ENCODE measurements at regions of chr11 and their contacts with region 1.

Region 1: DNA sequence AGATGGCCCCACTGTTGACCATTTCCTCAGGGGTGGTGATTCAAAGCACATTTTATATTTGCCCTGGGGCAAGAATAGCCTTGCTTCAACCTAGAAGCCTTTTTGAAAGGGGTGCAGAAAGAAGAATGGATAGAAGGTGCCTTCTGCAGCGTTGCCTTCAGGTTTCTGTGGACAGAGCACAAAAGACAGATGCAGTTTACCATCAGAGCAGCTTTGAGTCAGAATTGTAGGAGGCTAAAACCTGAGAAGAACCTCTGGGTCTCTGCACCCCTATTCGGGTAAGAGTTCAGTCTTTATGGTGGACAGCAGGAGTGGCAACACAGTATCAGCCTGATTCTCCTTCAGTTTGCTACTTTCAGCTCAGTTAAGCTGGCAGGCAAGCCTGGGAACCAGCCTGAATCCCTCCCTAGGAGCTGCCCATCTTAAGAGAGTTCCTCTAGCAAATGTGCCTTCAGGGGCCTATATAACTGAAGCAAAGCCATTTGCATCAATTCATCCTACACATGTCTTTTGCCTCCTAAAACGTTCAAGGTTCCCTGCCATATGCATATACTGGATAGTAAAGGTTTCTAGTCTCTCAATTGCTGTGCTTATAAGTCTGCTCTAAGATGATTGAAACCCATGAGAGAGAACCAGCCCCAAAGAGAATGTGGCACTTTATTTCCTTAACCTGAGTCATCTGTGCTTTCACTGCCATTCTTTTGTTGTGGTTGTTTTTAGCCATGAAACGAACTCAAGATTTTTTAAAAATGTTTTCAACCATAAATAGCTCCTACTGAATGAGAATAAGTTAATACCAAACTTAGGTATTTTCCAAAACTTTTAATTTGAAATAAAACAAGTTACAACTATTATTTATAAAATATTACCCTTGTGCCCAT is 123.0 kb downstream of the TRIM44 start:
- DNase-seq: no peak
- H3K4me3 Mint-ChIP-seq: no peak overlapping the region
- H3K27ac Mint-ChIP-seq: no peak overlapping the region
- H3K4me1 Mint-ChIP-seq: peaks cover 22% of the 10 kb centered on the region
- H3K27me3 Mint-ChIP-seq: peaks cover 3% of the 10 kb centered on the region

Region 2: DNA sequence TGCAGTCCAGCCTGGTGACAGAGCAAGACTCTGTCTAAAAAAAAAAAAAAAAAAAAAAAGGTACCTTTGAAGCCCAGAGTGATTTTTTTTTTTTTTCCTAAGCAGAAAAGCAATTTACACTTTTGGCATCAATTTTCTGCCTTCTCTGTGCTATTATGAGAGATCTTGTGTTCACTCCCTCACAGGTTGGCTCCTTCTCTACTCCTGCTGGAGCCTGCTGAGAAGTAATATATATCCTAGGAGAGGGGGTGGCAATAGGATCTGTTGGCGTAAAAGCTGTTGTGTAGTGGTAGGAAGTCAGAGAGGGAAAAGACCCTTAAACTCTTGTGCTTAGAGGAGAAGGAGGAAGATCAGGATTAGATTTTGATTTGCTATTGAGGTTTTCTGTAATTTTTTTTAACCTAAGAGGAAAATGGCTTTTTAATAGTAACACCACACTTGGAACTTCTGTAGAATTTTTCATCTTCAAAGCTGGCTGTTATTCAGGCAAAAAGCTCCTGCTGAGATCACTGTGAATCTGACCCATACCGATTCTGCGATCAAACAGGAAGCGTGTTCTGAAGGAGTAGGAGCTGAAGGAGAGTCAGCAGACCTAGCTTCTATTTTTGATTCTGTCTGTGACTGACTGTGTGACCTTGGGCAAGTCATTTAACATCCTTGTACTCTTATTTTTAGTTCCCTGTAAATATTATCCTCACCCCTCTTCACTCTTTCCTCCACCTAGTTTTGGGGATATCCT is 45.3 kb before region 1 on chr11:
- intact Hi-C with region 1: loop called (anchors 5 kb)
- DNase-seq: no peak
- H3K4me3 Mint-ChIP-seq: no peak overlapping the region
- H3K27ac Mint-ChIP-seq: no peak overlapping the region
- H3K4me1 Mint-ChIP-seq: peaks cover 5% of the 10 kb centered on the region
- H3K27me3 Mint-ChIP-seq: no peaks in the 10 kb centered on the region

Region 3: DNA sequence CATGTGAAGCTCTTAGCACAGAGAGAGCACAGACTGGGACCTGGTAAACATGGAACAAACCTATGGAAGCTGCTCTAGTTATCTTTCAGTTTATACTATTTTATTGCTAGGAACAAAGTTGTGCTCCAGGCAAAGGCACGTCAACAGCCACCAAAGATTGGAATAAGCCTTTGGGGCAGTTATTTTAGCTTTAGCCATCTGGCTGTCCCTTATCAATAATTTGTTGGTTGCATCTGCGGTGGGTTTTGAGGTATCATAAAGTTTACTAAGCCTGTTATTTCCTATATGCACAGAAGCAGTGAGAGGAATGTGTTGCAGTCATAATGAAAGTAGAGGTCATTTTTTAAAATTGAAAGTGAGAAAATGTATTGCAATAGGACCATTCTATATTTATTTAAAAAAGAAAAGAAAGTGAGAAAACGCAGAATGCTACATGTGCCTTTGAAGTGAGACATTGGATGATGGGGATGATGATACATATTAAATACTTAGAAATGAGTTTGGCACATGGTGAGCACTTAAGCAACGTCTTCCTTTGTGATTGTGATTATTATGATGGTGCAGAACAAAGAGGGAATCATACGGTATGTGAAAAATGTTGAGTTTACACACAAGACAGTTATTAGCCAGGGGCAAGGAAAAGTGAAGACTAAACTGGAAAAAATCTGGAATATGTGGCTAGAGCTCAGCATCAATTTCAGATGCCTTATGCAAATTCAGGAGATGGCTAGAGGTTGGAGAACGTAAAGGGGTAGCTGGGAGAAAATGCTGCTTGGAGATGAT is 568.9 kb after region 1 on chr11:
- intact Hi-C with region 1: no loop called
- DNase-seq: no peak
- H3K4me3 Mint-ChIP-seq: peak overlapping the region; percentile 11
- H3K27ac Mint-ChIP-seq: peak overlapping the region; percentile 72
- H3K4me1 Mint-ChIP-seq: peaks cover 78% of the 10 kb centered on the region
- H3K27me3 Mint-ChIP-seq: peaks cover 34% of the 10 kb centered on the region

Measured in activated T-helper 1 cell treated with anti-CD3 and anti-CD28 coated beads, Interleukin-12 subunit alpha, Interleukin-12 subunit beta, Interleukin-2, Interleukin-4 antibody, amounts not matched to agents 30 ng/mL and 10 ng/mL and 1 ng/mL, durations not matched to agents 14 hours and 24 hours and 36 hours (primary cell).